ENCODE measurements at regions of chr20 and their contacts with region 1.

Region 1: DNA sequence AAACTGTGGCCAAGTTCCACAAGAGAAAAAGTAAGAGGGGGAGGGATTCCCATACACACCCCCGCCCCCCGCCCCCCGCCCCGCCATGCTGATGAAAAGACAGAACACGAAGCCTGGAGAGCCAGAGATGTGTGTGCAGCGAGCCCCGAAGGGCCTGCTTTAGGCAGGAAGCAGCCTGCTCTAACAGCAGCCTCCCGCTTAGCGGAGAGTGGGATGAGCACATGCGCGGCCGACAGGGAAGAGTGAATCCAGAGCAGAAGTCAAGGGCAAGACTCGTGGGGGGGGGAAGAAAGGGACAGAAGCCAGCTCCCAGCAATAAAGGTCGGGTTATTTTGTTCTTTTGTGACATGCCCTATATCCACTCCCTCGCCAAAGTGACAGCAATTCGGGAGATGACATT is 67.2 kb upstream of the PTGIS start:
- DNase-seq: no peak
- ATAC-seq: no peak
- H3K4me3 ChIP-seq: no peak overlapping the region
- H3K27ac ChIP-seq: no peak overlapping the region
- H3K4me1 ChIP-seq: no peaks in the 10 kb centered on the region
- H3K27me3 ChIP-seq: no peaks in the 10 kb centered on the region
- CTCF ChIP-seq: no peak
- POLR2A ChIP-seq: no peak
- RAD21 ChIP-seq: no peak

Region 2: GRCh38 chr20:49669601-49670189 is 34.5 kb after region 1 on chr20:
- CTCF ChIA-PET with region 1: no interaction called
- POLR2A ChIA-PET with region 1: no interaction called
- RAD21 ChIA-PET with region 1: interaction called in 1 of 2 experiments, 3 read pairs
- intact Hi-C with region 1: loop called (anchors 5 kb)
- DNase-seq: no peak
- ATAC-seq: no peak
- H3K4me3 ChIP-seq: no peak overlapping the region
- H3K27ac ChIP-seq: no peak overlapping the region
- H3K4me1 ChIP-seq: peaks cover 23 to 45% of the 10 kb centered on the region in 2 experiments
- H3K27me3 ChIP-seq: no peaks in the 10 kb centered on the region
- CTCF ChIP-seq: no peak
- POLR2A ChIP-seq: no peak
- RAD21 ChIP-seq: no peak

Measured in HCT116 (cell line).